ENCODE measurements at regions of chr17 and their contacts with region 1.

Region 1: DNA sequence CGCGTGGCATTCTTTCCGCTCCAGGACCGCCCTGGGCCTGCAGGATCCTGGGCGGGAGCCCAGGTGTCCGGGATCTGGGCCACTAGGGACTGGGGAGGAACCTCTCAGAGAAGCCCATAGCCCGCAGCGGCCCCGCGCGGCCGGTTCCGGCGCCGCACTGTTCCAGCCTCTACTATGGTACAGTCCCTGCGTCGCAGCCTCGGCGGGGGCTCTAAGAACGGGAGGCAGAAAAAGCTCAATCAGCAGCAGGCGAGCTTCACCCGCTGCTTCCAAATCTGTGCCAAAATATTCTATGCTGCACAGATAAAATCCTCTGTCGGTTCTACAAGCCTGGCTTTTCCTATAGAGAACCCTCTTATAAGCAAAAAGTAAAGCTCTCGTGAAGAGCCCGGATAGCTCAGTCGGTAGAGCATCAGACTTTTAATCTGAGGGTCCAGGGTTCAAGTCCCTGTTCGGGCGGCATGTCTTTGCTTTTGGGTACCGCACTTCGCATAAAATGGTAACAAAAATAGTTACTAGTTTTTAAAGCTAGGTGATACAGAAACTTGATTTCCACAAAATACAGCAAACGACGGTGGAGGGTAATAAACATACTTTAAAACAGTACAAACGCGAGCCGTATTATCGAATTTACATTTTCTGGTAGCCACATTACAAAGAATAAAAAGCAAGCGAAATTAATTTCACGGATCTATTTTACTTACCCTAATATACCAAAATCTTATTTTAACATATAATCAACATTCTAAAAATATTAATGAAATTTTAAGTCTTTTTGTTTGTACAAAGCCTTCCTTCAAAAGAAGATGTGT is 661 bp upstream of the ALOXE3 start:
- DNase-seq: peak in 1 of 2 experiments; percentile 96
- H3K4me3 ChIP-seq: peak overlapping the region; percentile 75 to 89 (median 82)
- H3K27ac ChIP-seq: no peak overlapping the region
- H3K4me1 ChIP-seq: peaks cover 0 to 12% (median 6%) of the 10 kb centered on the region in 4 experiments; a peak in 5 of 7 replicates
- H3K27me3 ChIP-seq: peaks cover 27 to 60% (median 52%) of the 10 kb centered on the region in 4 experiments
- CTCF ChIP-seq: peak; percentile 78 to 92 (median 81)
- EP300 ChIP-seq: 0 out of 3 replicates have a peak, but pooled peaks of 1 of the 2 experiments have one; percentile 19
- POLR2A ChIP-seq: no peak
- RAD21 ChIP-seq: peak; percentile 58 to 72

Region 2: GRCh38 chr17:7972131-7972785 is 146.7 kb before region 1 on chr17:
- CTCF ChIA-PET with region 1: no interaction called
- POLR2A ChIA-PET with region 1: no interaction called
- DNase-seq: no peak
- H3K4me3 ChIP-seq: no peak overlapping the region
- H3K27ac ChIP-seq: no peak overlapping the region
- H3K4me1 ChIP-seq: no peaks in the 10 kb centered on the region
- H3K27me3 ChIP-seq: no peaks in the 10 kb centered on the region
- CTCF ChIP-seq: no peak
- EP300 ChIP-seq: no peak
- POLR2A ChIP-seq: no peak
- RAD21 ChIP-seq: no peak

Region 3: DNA sequence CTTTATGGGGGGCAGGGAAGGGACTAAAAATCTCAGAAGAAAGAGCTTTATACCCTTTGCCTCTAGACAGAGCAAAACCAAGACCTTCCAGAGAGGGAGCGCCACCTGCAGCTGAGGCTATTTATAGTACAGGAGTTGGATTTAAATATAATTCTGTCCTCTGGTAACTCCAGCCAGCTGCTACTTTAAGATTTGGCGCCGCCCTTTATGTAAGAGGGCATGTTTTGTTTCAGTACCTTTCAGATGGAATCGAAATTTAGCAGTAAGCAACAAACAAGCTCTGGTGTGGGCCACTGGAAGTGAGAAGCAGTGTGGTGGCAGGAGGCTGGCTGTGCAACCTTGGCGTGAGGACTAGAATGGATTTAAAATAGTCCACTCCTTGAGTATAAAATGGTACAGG is 121.8 kb before region 1 on chr17:
- CTCF ChIA-PET with region 1: no interaction called
- POLR2A ChIA-PET with region 1: no interaction called
- DNase-seq: no peak
- H3K4me3 ChIP-seq: no peak overlapping the region
- H3K27ac ChIP-seq: no peak overlapping the region
- H3K4me1 ChIP-seq: peaks cover 0 to 2% (median 0%) of the 10 kb centered on the region in 4 experiments; a peak in 1 of 7 replicates
- H3K27me3 ChIP-seq: peaks cover 5 to 14% (median 6%) of the 10 kb centered on the region in 4 experiments
- CTCF ChIP-seq: peak in 2 of 3 experiments; percentile 66 to 81; a peak in 3 of 4 replicates
- EP300 ChIP-seq: no peak
- POLR2A ChIP-seq: no peak
- RAD21 ChIP-seq: peak; percentile 48 to 55

Region 4: GRCh38 chr17:8079291-8080207 is 39.4 kb before region 1 on chr17:
- CTCF ChIA-PET with region 1: interaction called, 501 read pairs
- POLR2A ChIA-PET with region 1: interaction called, 3 read pairs
- DNase-seq: peak; percentile 74 to 95
- H3K4me3 ChIP-seq: peak overlapping the region; percentile 58 to 72 (median 64)
- H3K27ac ChIP-seq: no peak overlapping the region
- H3K4me1 ChIP-seq: peaks cover 0 to 5% (median 2%) of the 10 kb centered on the region in 4 experiments; a peak in 4 of 7 replicates
- H3K27me3 ChIP-seq: peaks cover 3 to 40% (median 29%) of the 10 kb centered on the region in 4 experiments
- CTCF ChIP-seq: peak; percentile 95 to 96 (median 96)
- EP300 ChIP-seq: no peak
- POLR2A ChIP-seq: no peak
- RAD21 ChIP-seq: peak; percentile 60 to 69

Region 5: GRCh38 chr17:8100111-8100510 is 18.9 kb before region 1 on chr17:
- CTCF ChIA-PET with region 1: interaction called, 501 read pairs
- POLR2A ChIA-PET with region 1: no interaction called
- DNase-seq: no peak
- H3K4me3 ChIP-seq: no peak overlapping the region
- H3K27ac ChIP-seq: no peak overlapping the region
- H3K4me1 ChIP-seq: no peaks in the 10 kb centered on the region
- H3K27me3 ChIP-seq: peaks cover 0 to 5% (median 1%) of the 10 kb centered on the region in 4 experiments; a peak in 3 of 7 replicates
- CTCF ChIP-seq: no peak
- EP300 ChIP-seq: no peak
- POLR2A ChIP-seq: no peak
- RAD21 ChIP-seq: no peak

Region 6: GRCh38 chr17:8138672-8139371 is 19.8 kb after region 1 on chr17:
- CTCF ChIA-PET with region 1: interaction called, 15 read pairs
- POLR2A ChIA-PET with region 1: interaction called, 23 read pairs
- DNase-seq: peak; percentile 94 to 100
- H3K4me3 ChIP-seq: peak overlapping the region; percentile 86 to 98 (median 92)
- H3K27ac ChIP-seq: peak overlapping the region; percentile 81
- H3K4me1 ChIP-seq: peaks cover 0 to 7% (median 4%) of the 10 kb centered on the region in 4 experiments; a peak in 4 of 7 replicates
- H3K27me3 ChIP-seq: peaks cover 0 to 7% (median 2%) of the 10 kb centered on the region in 4 experiments; a peak in 4 of 7 replicates
- CTCF ChIP-seq: peak; percentile 63 to 96 (median 78)
- EP300 ChIP-seq: peak in 1 of 2 experiments; percentile 89; a peak in 1 of 3 replicates
- POLR2A ChIP-seq: peak in 1 of 2 experiments; percentile 59; a peak in 1 of 3 replicates
- RAD21 ChIP-seq: peak; percentile 58 to 62

Region 7: DNA sequence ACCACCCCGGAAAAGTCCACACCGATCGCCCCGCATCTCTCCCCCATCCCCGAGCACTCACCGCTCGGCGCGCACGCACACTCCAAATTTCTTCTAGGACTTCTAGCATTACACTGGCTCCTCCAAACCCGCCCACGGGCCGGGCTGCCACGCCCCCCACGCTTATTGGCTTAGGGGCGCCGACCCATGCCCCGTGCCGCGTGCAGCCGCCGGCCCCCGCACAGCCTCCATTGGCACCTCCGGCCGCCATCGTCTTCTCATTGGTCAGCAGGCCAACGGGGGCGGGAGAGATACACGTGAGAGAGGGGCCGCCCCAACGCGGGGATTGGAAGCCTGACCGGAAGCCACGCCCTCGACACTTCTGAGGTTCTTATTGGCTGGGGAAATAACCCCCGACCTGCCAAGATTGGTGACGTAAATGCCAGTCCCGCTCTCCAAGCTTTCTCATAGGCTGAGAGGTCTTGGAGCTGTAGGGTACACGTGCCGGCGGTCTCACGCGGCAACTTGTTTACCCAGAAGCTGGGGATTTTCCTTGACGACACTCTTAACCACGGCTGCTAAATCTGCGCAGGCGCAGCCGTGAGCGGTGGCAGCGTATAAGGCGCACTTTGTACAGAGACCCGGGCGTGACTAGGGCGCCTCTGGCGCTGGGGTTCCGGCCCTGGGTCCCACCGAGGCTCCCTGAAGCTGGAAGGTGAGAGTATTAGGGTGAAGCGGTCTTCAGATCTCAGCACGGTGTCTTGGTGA is 37.4 kb after region 1 on chr17:
- CTCF ChIA-PET with region 1: interaction called, 54 read pairs
- POLR2A ChIA-PET with region 1: interaction called, 49 read pairs
- DNase-seq: peak; percentile 99 to 100
- H3K4me3 ChIP-seq: peak overlapping the region; percentile 76 to 93 (median 85)
- H3K27ac ChIP-seq: peak overlapping the region; percentile 89
- H3K4me1 ChIP-seq: peaks cover 12 to 35% (median 20%) of the 10 kb centered on the region in 4 experiments
- H3K27me3 ChIP-seq: no peaks in the 10 kb centered on the region
- CTCF ChIP-seq: peak in 1 of 3 experiments; percentile 9; a peak in 1 of 4 replicates
- EP300 ChIP-seq: peak in 1 of 2 experiments; percentile 63; a peak in 1 of 3 replicates
- POLR2A ChIP-seq: peak; percentile 54 to 69
- RAD21 ChIP-seq: peak in 1 of 2 experiments; percentile 23; a peak in 1 of 4 replicates

Region 8: DNA sequence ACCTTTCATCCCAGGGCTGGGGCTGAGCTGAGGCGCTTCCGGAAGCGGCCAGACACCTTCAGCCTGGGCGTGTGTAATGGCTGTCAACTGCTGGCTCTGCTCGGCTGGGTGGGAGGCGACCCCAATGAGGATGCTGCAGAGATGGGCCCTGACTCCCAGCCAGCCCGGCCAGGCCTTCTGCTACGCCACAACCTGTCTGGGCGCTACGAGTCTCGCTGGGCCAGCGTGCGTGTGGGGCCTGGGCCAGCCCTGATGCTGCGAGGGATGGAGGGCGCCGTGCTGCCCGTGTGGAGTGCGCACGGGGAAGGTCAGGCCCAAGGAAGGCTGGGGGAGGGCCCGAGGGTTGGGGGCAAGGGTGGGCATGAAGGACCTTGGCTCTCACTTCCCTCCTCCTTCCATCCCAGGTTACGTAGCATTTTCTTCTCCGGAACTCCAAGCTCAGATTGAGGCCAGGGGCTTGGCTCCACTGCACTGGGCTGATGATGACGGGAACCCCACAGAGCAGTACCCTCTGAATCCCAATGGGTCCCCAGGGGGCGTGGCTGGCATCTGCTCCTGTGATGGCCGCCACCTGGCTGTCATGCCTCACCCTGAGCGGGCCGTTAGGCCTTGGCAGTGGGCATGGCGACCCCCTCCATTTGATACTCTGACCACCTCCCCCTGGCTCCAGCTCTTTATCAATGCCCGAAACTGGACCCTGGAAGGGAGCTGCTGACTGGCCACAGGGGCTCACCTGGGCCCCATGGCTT is 149.7 kb after region 1 on chr17:
- CTCF ChIA-PET with region 1: no interaction called
- POLR2A ChIA-PET with region 1: no interaction called
- DNase-seq: no peak
- H3K4me3 ChIP-seq: no peak overlapping the region
- H3K27ac ChIP-seq: no peak overlapping the region
- H3K4me1 ChIP-seq: no peaks in the 10 kb centered on the region
- H3K27me3 ChIP-seq: no peaks in the 10 kb centered on the region
- CTCF ChIP-seq: no peak
- EP300 ChIP-seq: no peak
- POLR2A ChIP-seq: no peak
- RAD21 ChIP-seq: no peak

Measured in H1 (cell line).